ENCODE measurements at regions of chr1 and their contacts with region 1.

Region 1: DNA sequence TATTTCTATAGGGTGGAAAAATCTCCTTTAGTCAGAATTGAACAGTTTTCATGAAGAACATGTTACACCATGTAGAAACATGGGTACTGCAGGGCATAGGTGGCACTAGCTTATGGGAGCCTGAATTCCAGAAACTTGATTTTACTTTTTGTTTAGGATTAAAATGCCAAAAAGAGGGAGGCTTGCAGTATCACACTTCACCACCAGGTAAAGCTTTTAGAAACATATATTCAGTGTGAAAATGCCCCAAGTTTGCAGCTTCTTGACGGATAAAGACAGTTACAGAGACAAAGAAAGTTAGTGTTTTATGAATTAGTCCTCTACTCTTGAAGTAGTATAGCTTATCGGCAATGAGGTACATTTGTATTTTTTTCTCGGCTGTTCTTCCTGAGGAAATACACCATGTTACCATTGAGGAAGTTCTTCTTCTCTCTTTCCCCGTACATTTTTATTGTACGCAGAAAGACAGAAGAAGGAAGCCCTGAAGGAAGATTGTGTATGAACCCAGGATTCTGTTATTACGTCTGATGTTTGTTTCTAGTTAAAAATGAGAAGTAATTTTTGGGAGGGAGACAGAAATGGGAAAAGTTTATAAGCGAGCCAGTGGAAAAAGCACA is 66.1 kb downstream of the PBX1 start:
- DNase-seq: no peak
- ATAC-seq: peak; percentile 22; the same call in 1 of the 2 replicates
- H3K4me3 Mint-ChIP-seq: no peak overlapping the region
- H3K27ac Mint-ChIP-seq: no peak overlapping the region
- H3K4me1 Mint-ChIP-seq: peaks cover 56% of the 10 kb centered on the region
- H3K27me3 Mint-ChIP-seq: no peaks in the 10 kb centered on the region
- CTCF ChIP-seq: no peak

Region 2: GRCh38 chr1:164635803-164636731 is 11.0 kb after region 1 on chr1:
- CTCF ChIA-PET with region 1: interaction called, 18 read pairs
- POLR2A ChIA-PET with region 1: no interaction called
- DNase-seq: no peak
- ATAC-seq: no peak
- H3K4me3 Mint-ChIP-seq: peak overlapping the region; percentile 44
- H3K27ac Mint-ChIP-seq: peak overlapping the region; percentile 90; the same call in 1 of the 2 replicates
- H3K4me1 Mint-ChIP-seq: peaks cover 78% of the 10 kb centered on the region
- H3K27me3 Mint-ChIP-seq: no peaks in the 10 kb centered on the region
- CTCF ChIP-seq: no peak

Region 3: DNA sequence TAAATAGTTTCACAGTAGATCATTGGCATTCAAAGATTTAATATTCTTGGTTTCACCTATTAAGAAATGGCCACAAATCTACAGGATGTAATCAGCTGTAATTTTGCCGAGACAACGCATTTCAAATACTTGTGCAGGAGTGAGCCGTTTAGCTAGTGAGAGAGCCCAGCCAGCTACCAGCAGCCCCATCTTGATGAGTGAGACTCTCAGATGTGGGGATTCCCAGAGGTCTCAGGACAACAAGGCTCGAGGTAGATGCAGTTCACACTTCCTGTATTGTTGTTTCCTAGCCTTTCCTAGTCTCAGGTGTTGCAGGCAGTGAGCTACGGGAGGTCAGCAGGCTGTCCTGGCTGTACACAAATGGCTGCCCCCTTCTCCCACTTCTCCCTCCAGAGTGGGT is 42.5 kb after region 1 on chr1:
- CTCF ChIA-PET with region 1: no interaction called
- POLR2A ChIA-PET with region 1: no interaction called
- DNase-seq: no peak
- ATAC-seq: no peak; the same call in 1 of the 2 replicates
- H3K4me3 Mint-ChIP-seq: no peak overlapping the region
- H3K27ac Mint-ChIP-seq: peak overlapping the region; percentile 32; the same call in 1 of the 2 replicates
- H3K4me1 Mint-ChIP-seq: peaks cover 57% of the 10 kb centered on the region
- H3K27me3 Mint-ChIP-seq: no peaks in the 10 kb centered on the region
- CTCF ChIP-seq: no peak

Region 4: DNA sequence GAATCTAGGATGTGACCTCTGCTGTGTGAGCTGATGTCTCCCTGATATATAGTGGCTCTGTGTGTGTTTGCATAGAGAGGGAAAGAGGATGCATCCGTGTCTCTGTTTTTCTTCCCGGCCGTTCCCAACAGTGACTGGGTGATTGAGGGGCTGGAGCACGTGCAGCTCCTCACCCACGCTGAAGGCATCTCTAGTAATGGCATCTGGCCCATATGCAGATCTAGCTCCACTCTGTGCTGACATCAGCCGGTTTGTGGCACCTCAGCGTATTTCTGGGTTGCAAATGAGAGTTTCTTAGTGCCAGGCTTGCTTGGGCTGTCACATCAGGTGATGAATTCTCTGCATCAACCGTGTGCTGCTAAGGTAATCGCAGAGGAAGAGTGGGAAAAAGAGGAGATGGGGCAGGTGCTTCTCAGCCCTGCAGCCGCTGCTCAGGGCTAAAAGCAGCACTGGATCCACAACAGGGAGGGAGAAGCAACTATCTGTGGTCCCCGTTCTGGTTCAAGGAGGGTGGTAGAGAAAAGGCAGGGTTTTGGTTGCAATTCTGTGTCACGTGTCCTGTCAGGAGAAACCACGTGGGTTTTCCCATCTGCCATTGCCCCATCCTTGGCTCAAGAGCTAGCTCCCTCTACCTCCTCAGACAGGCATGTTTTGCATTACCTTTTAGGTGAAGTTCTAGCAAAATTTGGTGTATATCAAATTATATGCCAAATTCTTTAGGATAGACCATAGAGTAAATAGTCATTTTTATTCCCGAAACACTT is 216.8 kb after region 1 on chr1:
- CTCF ChIA-PET with region 1: no interaction called
- POLR2A ChIA-PET with region 1: no interaction called
- DNase-seq: no peak
- ATAC-seq: no peak
- H3K4me3 Mint-ChIP-seq: no peak overlapping the region
- H3K27ac Mint-ChIP-seq: peak overlapping the region; percentile 57; the same call in 1 of the 2 replicates
- H3K4me1 Mint-ChIP-seq: peaks cover 22% of the 10 kb centered on the region
- H3K27me3 Mint-ChIP-seq: no peaks in the 10 kb centered on the region
- CTCF ChIP-seq: no peak